ENCODE measurements at regions of chr3 and their contacts with region 1.

Region 1: GRCh38 chr3:134600685-134601463 is 49.9 kb downstream of the KY start:
- DNase-seq: peak; percentile 88

Region 2: DNA sequence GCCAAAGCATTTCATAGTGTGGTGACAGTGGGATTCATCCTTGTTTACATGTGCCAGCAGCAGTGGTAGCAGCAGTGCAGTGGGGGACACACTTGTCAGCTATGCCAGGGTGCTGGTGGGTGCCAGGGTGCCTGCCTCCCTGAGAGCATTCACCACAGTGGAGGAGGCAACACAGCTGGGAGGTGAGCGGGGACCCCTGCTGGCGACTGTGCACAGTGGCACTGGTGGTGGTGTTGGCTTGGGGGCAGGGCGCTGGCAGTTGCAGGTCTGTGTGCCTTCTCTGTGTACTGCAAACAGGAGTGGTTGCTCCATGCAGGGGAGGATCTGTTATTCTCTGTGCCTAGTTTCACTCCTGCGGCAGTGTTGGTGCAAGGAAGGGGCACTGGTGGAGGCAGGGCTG is 73.8 kb before region 1 on chr3:
- intact Hi-C with region 1: no loop called
- DNase-seq: peak; percentile 76

Region 3: DNA sequence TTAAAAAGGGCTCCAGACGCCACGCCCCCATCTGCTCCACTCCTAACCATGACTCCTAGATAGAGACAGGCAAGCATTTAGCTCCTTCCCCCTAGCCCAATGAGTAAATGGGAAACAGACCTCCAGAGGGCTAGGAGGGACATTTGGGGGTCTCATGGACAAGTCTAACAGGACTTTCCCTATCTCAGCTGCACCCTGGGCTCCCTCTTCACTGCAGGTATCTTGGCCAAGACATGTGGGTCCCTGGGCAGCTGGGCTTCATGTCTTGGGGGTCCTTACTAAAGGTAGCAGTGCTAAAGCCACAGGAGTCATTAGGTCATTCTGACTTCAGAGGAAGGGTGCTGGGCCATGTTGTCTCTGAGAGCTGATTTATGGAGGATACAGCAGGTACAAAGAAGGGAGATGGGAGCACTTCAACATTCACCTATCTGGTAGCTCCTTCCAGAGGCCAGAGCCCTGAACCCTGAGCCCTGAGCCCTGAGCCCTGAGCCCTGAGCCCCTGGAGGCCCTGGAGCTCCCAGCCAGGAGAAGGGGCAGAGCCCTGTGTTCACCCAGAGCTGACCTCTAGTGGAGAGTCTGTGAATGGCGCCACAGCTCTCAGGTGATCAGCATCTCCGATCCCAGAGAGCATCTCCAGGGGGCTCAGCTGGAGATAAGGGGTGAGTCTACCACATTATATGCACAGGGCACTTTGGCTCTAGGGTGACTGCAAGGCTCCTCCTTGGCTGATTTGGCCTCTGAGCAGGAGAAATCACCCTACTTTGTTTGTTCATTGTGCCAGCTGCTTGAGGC is 154.1 kb after region 1 on chr3:
- intact Hi-C with region 1: loop called (anchors 2 kb)
- DNase-seq: no peak

Region 4: DNA sequence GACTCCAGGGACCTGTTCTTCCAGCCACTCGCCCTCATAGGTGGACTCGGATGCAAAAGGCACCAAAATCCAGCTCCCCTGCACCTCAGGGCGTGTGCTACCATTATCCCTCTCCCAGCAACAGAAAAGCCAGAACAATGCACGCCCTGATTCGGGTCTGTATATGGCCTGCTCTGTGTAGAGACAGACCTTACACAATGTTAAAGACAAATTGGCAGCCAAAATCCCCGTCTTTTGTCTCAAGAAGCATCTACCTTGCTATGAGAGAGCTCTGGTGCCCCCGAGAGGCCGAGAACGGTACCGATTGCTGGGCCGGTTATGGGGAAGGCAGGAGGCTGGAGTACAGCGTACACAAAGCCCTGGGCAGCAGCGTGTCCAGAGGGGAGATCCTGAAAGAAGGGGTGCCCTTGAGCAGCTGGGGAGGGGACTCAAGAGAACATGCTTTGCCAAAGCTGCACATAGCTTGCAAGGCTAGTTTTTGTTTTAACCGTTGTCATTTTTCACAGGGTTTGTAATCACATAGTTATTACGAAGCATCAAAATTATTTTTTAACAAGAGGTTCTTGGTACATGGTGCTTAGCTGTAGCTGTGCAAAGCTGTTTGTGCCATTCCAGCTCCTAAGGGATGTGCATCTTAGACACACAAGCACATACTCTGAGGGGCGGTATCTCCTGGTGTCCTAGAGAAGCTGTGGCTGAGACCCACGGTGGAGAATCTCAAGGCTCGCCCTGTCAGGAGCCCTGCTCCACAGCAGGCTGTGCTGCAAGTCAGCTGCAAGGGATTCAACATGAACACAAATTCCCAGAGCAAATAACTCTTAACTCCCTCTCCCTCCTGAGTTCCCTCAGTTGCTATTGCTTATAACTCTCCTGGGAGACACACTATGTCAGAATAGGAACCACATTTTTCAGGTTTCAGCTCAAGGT is 903.1 kb after region 1 on chr3:
- intact Hi-C with region 1: loop called (anchors 5 kb)
- DNase-seq: no peak

Region 5: DNA sequence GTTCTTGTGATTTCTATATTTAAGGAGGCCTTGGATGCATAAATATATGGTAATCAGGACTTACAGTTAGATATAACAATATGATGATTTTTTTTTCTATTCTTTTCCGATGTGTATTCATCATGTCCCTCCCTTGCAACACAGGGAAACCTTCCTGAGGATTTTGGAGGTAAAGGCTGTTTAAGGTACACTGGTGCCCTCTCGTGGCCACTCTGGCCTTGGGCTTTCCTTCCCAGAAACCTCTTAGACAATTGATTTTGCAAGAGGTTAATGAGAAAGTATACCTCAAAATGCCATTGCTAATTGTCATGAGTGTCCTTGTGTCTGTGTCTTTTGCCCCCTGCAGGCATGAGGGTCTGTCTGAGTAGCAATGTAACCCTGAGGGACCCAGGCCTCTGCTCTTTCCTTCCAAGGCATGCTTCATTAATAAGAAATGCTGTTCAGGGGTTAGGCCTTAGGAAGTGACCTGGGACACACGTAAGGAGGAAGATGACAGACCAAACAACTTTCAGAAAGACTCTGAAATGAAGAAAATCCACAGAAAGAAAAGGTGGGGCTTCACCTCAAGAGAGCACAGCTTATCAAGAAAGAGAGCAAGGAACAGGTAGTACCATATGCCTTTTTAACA is 1294.3 kb after region 1 on chr3:
- intact Hi-C with region 1: loop called (anchors 5 kb)
- DNase-seq: no peak

Measured in cardiac septum (tissue), 1 donor.